ENCODE measurements at regions of chr6 and their contacts with region 1.

Region 1: GRCh38 chr6:137313928-137314855 is 95.0 kb upstream of the IFNGR1 start:
- DNase-seq: peak; percentile 39 to 83
- ATAC-seq: peak; percentile 81

Region 2: GRCh38 chr6:137094411-137095008 is 219.7 kb before region 1 on chr6:
- intact Hi-C with region 1: loop called in 1 of 2 experiments (anchors 10 kb)
- DNase-seq: peak; percentile 27 to 64
- ATAC-seq: peak; percentile 58

Region 3: GRCh38 chr6:137271245-137272183 is 42.7 kb before region 1 on chr6:
- intact Hi-C with region 1: loop called in 1 of 2 experiments (anchors 5 kb)
- DNase-seq: no peak
- ATAC-seq: peak; percentile 72

Region 4: GRCh38 chr6:137754366-137754765 is 440.2 kb after region 1 on chr6:
- intact Hi-C with region 1: no loop called
- DNase-seq: no peak
- ATAC-seq: no peak

Measured in left colon (tissue), 2 donors.